ENCODE measurements at regions of chr12 and their contacts with region 1.

Region 1: DNA sequence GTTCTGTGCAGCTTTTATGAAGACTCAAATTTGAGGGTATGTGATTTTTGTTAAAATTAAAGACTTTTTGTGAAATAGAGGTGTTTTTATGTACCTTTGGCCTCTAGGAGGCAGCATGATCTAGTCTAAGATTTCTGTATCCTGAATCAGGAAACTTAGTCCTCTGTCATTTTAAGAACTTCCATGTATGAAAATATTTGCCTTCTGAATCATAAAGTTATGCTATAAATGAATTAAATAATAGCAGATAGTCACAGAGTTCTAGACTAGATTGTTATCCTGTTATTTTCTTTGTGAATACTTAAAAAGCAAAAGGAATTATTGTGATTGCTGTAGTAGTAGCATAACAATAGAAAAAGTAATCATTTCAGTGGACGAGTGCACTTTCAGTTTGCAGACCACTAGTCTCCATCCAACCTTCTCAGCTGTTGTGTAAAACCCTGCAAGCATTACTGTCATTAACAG is 56.3 kb downstream of the FGD4 start:
- DNase-seq: peak; percentile 45
- ATAC-seq: peak; percentile 55
- H3K4me3 ChIP-seq: peak overlapping the region in 1 of 2 experiments; percentile 19; a peak in 1 of 4 replicates
- H3K27ac ChIP-seq: no peak overlapping the region
- H3K4me1 ChIP-seq: peaks cover 13 to 32% of the 10 kb centered on the region in 2 experiments
- H3K27me3 ChIP-seq: no peaks in the 10 kb centered on the region
- CTCF ChIP-seq: peak; percentile 54 to 76 (median 62); a peak in 4 of 6 replicates
- POLR2A ChIP-seq: no peak
- RAD21 ChIP-seq: peak; percentile 77

Region 2: DNA sequence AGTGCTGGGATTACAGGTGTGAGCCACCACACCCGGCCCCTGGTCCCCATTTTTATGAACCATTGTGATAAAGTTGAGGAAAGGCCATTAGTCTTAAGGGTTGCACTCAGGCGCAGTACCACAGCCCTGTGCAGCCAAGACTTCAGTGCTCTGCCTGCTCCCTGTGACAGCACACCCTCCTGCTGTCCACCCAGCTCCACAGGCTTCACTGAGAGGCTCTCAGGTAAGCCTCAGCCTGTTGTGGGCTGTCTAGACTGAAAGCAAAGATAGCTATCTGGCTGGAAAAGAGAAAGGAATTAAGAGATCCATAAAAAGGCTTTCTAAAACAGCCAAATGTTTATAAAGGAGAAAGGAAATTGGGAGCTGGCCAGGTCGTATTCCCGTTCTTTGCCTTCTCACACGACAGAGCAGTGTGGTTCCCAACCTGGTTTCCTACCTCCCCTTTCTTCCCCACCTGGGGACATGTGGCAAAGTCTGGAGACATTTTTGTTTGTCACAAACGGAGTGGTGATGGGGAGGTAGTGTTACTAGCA is 204.3 kb after region 1 on chr12:
- CTCF ChIA-PET with region 1: interaction called, 12 read pairs
- POLR2A ChIA-PET with region 1: no interaction called
- RAD21 ChIA-PET with region 1: no interaction called
- intact Hi-C with region 1: loop called (anchors 5 kb)
- DNase-seq: no peak
- ATAC-seq: no peak
- H3K4me3 ChIP-seq: no peak overlapping the region
- H3K27ac ChIP-seq: no peak overlapping the region
- H3K4me1 ChIP-seq: peaks cover 0 to 4% of the 10 kb centered on the region in 2 experiments; a peak in 1 of 4 replicates
- H3K27me3 ChIP-seq: no peaks in the 10 kb centered on the region
- CTCF ChIP-seq: no peak
- POLR2A ChIP-seq: no peak
- RAD21 ChIP-seq: no peak

Region 3: GRCh38 chr12:32671930-32672780 is 216.5 kb after region 1 on chr12:
- CTCF ChIA-PET with region 1: interaction called, 13 read pairs
- POLR2A ChIA-PET with region 1: no interaction called
- RAD21 ChIA-PET with region 1: no interaction called
- intact Hi-C with region 1: loop called (anchors 2 kb)
- DNase-seq: peak; percentile 46
- ATAC-seq: peak; percentile 88
- H3K4me3 ChIP-seq: no peak overlapping the region
- H3K27ac ChIP-seq: no peak overlapping the region
- H3K4me1 ChIP-seq: peaks cover 0 to 3% of the 10 kb centered on the region in 2 experiments; a peak in 2 of 4 replicates
- H3K27me3 ChIP-seq: no peaks in the 10 kb centered on the region
- CTCF ChIP-seq: peak; percentile 51 to 69 (median 56); a peak in 5 of 6 replicates
- POLR2A ChIP-seq: no peak
- RAD21 ChIP-seq: peak; percentile 80

Region 4: DNA sequence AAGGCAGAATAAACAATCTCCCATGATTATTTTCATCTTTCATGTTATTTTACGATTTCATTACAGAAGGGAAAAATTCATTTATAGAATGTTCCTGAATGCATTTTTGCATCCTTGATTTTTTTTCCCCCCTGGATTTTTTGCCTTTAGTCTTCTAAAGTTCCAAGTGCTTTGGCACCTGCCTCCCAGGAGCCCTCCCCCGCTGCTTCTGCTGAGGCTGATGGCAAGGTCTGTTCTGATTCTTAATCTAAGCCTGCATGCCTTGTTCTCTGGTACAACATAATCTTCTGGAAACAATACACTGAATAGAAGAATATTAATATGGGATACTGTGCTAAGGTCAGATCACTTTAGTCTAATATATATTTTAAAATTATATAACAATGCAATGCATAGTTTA is 282.1 kb after region 1 on chr12:
- CTCF ChIA-PET with region 1: no interaction called
- POLR2A ChIA-PET with region 1: no interaction called
- RAD21 ChIA-PET with region 1: no interaction called
- intact Hi-C with region 1: loop called (anchors 10 kb)
- DNase-seq: no peak
- ATAC-seq: no peak
- H3K4me3 ChIP-seq: no peak overlapping the region
- H3K27ac ChIP-seq: no peak overlapping the region
- H3K4me1 ChIP-seq: no peaks in the 10 kb centered on the region
- H3K27me3 ChIP-seq: no peaks in the 10 kb centered on the region
- CTCF ChIP-seq: no peak
- POLR2A ChIP-seq: no peak
- RAD21 ChIP-seq: no peak

Measured in HCT116 (cell line).